ENCODE measurements at regions of chr1 and their contacts with region 1.

Region 1: DNA sequence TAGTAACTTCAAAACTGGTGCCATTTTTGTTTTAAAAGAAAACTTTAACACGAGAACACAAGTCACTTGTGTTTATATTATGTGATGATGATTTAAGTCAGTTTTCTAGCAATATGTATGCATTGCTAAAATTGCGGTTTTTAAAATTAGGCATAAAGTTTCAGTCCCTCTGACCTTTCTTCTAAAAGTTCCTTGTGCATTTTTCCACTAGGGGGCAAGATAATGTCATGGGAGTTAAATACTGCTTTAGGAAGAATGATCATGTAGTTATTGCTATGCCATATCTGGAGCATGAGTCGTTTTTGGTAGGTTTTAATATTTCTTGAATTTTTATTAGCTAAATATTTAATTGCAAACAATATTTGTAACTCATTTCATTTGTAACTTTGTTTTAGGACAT is 10.7 kb downstream of the CDC7 start:
- DNase-seq: no peak
- H3K4me3 ChIP-seq: no peak overlapping the region
- H3K27ac ChIP-seq: no peak overlapping the region
- H3K4me1 ChIP-seq: no peaks in the 10 kb centered on the region; a peak in 1 of 4 replicates
- H3K27me3 ChIP-seq: no peaks in the 10 kb centered on the region
- CTCF ChIP-seq: peak; percentile 82
- EP300 ChIP-seq: no peak
- RAD21 ChIP-seq: peak; percentile 73

Region 2: GRCh38 chr1:91345395-91346005 is 165.9 kb before region 1 on chr1:
- CTCF ChIA-PET with region 1: no interaction called
- POLR2A ChIA-PET with region 1: no interaction called
- DNase-seq: no peak
- H3K4me3 ChIP-seq: no peak overlapping the region
- H3K27ac ChIP-seq: no peak overlapping the region
- H3K4me1 ChIP-seq: no peaks in the 10 kb centered on the region
- H3K27me3 ChIP-seq: no peaks in the 10 kb centered on the region
- CTCF ChIP-seq: no peak
- EP300 ChIP-seq: no peak
- RAD21 ChIP-seq: no peak

Region 3: DNA sequence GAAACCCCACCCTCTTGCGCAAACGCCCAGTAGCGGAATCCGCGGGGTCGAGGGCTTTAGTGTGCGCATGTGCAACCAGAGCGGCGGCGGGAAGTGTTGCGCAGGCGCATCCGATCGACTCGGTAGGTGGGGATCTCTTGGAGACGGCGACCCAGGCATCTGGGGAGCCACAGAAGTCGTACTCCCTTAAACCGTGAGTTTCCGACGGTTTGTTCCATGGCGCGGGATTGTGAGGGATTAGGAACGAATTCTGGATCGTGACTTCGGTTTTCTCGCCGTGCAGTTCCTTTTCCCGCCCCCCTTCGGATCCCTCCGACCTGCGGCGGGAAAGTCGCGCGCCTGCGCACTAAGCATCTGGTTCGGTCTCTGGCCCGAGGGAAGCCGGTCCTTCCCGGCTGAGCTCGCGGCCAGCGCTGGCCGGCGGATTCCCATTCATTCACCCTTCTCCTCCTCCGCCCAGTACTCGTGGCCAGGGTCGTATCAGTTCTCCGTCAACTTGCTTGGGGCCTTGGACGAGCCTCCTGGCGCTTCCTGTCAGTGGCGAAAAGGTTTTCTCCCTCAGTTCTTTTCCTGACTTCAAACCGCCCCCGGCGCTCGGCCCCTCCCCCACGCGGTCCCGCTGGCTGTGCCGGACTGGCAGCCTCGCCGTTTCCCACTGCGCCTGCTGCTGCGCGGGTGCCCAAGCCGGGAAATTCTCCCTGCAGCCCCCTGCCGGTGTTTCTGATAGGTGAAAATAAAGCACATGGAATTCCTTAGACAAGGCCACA is 10.4 kb before region 1 on chr1 and contains the start of gene CDC7:
- CTCF ChIA-PET with region 1: interaction called, 37 read pairs
- POLR2A ChIA-PET with region 1: no interaction called
- DNase-seq: peak; percentile 90
- H3K4me3 ChIP-seq: peak within 1 kb of the TSS; percentile 78 to 83
- H3K27ac ChIP-seq: peak within 1 kb of the TSS; percentile 82 to 96
- H3K4me1 ChIP-seq: peaks cover 0 to 3% of the 10 kb centered on the region in 2 experiments; a peak in 2 of 4 replicates
- H3K27me3 ChIP-seq: no peaks in the 10 kb centered on the region
- CTCF ChIP-seq: peak; percentile 62
- EP300 ChIP-seq: no peak; a peak in 1 of 4 replicates
- RAD21 ChIP-seq: peak; percentile 40
- polyA plus RNA-seq, gene CDC7: 2.6 TPM in 2 replicates

Region 4: GRCh38 chr1:91523482-91523881 is 12.1 kb after region 1 on chr1:
- CTCF ChIA-PET with region 1: interaction called, 16 read pairs
- POLR2A ChIA-PET with region 1: no interaction called
- DNase-seq: no peak
- H3K4me3 ChIP-seq: no peak overlapping the region
- H3K27ac ChIP-seq: no peak overlapping the region
- H3K4me1 ChIP-seq: no peaks in the 10 kb centered on the region
- H3K27me3 ChIP-seq: no peaks in the 10 kb centered on the region
- CTCF ChIP-seq: no peak
- EP300 ChIP-seq: no peak
- RAD21 ChIP-seq: no peak

Region 5: GRCh38 chr1:91673613-91674012 is 162.2 kb after region 1 on chr1:
- CTCF ChIA-PET with region 1: no interaction called
- POLR2A ChIA-PET with region 1: no interaction called
- DNase-seq: no peak
- H3K4me3 ChIP-seq: no peak overlapping the region
- H3K27ac ChIP-seq: no peak overlapping the region
- H3K4me1 ChIP-seq: no peaks in the 10 kb centered on the region
- H3K27me3 ChIP-seq: peaks cover 42% of the 10 kb centered on the region; the same call in 1 of the 2 replicates
- CTCF ChIP-seq: no peak
- EP300 ChIP-seq: no peak
- RAD21 ChIP-seq: no peak

Region 6: GRCh38 chr1:91929250-91929649 is 417.9 kb after region 1 on chr1:
- CTCF ChIA-PET with region 1: interaction called, 19 read pairs
- POLR2A ChIA-PET with region 1: no interaction called
- DNase-seq: no peak
- H3K4me3 ChIP-seq: no peak overlapping the region
- H3K27ac ChIP-seq: no peak overlapping the region
- H3K4me1 ChIP-seq: no peaks in the 10 kb centered on the region
- H3K27me3 ChIP-seq: no peaks in the 10 kb centered on the region
- CTCF ChIP-seq: no peak
- EP300 ChIP-seq: no peak
- RAD21 ChIP-seq: no peak